HAP-1 (cell line): ENCODE measurements at regions of chr16 and their contacts with region 1.

Region 1: DNA sequence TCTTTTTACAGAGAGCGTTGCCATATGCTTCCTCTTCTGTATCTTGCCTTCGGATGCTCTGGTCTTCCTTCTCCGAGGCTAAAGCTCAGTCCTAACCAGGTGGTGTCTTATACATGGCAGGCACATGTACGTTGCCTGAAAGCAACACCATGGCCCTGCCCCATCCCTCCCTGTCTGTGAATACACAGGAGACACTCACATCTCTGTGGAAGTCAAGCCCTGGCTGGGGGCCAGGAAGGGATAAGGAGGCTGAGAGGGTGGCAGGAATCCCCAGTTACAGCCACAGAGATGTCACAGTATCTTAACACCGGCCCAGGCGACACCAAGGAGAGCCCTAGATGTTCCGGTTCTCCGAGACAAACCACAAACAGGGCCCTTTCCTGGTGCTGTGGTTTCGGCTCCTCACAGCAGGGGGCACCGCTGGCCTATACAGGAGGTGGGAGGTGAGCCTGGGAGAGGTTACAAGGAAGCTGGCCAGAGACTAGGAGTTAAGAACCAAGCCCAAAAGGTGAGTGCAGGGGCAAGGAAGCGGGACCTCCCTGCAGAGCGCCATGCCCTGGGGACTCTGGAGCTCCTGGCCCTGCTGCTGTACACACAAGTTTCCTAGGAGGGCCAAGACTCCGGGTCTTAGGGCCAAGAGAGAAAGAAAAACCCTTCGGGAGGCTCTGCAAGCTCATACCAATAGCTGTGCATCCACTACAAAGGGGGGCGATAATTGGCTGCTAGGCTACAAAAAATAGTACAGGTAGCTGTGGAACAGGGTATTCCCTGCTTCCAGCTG is 41.7 kb downstream of the SRL start:
- DNase-seq: peak; percentile 27 to 80
- H3K4me3 ChIP-seq: no peak overlapping the region
- H3K4me1 ChIP-seq: no peaks in the 10 kb centered on the region
- H3K27me3 ChIP-seq: no peaks in the 10 kb centered on the region

Region 2: DNA sequence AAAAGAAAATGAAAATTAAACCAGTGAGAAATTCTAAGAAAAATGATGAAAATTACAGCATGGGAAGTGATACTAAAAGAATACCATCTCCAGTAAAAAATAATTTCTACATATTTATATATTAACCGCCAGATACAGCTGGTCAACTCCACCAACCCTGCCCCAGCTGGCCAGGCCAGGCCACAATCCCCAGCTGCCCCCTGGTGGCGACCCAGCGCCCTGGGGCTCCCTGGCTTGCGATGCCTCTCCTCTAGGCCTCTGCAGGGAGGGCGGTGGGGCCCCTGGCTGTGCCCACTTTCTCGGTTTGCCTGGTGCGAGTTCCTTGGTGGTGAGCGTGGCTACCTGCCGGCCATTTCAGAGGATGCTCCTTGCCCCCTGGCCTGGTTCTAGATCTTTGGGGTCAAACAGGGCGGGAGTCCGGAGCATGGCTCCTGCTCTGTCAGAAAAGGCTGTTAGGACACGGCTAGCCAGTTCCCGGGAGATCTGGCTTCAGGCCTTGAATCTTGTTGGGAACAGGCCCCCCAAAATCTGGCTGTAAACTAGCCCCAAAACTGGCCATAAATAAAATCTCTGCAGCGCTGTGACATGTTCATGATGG is 130.2 kb after region 1 on chr16:
- in situ Hi-C with region 1: loop called (anchors 10 kb)
- DNase-seq: peak in 1 of 2 experiments; percentile 84
- H3K4me3 ChIP-seq: no peak overlapping the region
- H3K4me1 ChIP-seq: peaks cover 7% of the 10 kb centered on the region
- H3K27me3 ChIP-seq: no peaks in the 10 kb centered on the region